ENCODE measurements at regions of chr1 and their contacts with region 1.

Region 1: GRCh38 chr1:23777979-23778814 is at the start of gene PITHD1:
- DNase-seq: peak; percentile 29
- H3K4me3 ChIP-seq: peak within 1 kb of the TSS; percentile 69
- H3K27me3 ChIP-seq: no peaks in the 10 kb centered on the region
- CTCF ChIP-seq: no peak
- polyA plus RNA-seq, gene PITHD1: 33.7 and 35.2 TPM in 2 replicates

Region 2: GRCh38 chr1:23908493-23909341 is 130.5 kb after region 1 on chr1:
- CTCF ChIA-PET with region 1: no interaction called
- POLR2A ChIA-PET with region 1: interaction called, 16 read pairs
- DNase-seq: no peak
- H3K4me3 ChIP-seq: no peak overlapping the region
- H3K27me3 ChIP-seq: peaks cover 12% of the 10 kb centered on the region
- CTCF ChIP-seq: no peak

Measured in BJ (cell line).